ENCODE measurements at regions of chr10 and their contacts with region 1.

Region 1: GRCh38 chr10:66637273-66638036 is 288.4 kb upstream of the LRRTM3 start:
- DNase-seq: no peak
- ATAC-seq: no peak
- H3K4me3 ChIP-seq: no peak overlapping the region
- H3K27ac ChIP-seq: no peak overlapping the region
- H3K4me1 ChIP-seq: no peaks in the 10 kb centered on the region
- H3K27me3 ChIP-seq: no peaks in the 10 kb centered on the region
- CTCF ChIP-seq: no peak

Region 2: DNA sequence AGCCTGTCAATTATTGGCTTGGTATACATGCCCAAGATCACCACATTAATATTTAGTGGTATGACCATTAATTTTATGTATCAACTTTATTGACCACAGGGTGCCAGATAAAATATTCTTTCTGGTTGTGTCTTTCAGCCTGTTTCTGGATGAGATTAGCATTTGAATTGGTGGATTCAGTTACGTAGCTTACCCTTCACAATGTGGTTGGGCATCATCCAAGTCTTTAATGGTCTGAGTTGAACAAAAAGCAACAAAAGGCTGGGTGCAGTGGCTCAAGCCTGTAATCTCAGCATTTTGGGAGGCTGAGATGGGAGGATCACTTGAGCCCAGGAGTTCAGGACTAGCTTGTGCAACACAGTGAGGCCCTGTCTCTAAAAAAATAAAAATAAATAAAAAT is 413.8 kb before region 1 on chr10:
- intact Hi-C with region 1: loop called in 1 of 2 experiments (anchors 10 kb)
- DNase-seq: no peak
- ATAC-seq: no peak
- H3K4me3 ChIP-seq: no peak overlapping the region
- H3K27ac ChIP-seq: no peak overlapping the region
- H3K4me1 ChIP-seq: no peaks in the 10 kb centered on the region
- H3K27me3 ChIP-seq: no peaks in the 10 kb centered on the region
- CTCF ChIP-seq: no peak